Posterior vena cava (tissue), 2 donors: ENCODE measurements at regions of chr1 and their contacts with region 1.

Region 1: DNA sequence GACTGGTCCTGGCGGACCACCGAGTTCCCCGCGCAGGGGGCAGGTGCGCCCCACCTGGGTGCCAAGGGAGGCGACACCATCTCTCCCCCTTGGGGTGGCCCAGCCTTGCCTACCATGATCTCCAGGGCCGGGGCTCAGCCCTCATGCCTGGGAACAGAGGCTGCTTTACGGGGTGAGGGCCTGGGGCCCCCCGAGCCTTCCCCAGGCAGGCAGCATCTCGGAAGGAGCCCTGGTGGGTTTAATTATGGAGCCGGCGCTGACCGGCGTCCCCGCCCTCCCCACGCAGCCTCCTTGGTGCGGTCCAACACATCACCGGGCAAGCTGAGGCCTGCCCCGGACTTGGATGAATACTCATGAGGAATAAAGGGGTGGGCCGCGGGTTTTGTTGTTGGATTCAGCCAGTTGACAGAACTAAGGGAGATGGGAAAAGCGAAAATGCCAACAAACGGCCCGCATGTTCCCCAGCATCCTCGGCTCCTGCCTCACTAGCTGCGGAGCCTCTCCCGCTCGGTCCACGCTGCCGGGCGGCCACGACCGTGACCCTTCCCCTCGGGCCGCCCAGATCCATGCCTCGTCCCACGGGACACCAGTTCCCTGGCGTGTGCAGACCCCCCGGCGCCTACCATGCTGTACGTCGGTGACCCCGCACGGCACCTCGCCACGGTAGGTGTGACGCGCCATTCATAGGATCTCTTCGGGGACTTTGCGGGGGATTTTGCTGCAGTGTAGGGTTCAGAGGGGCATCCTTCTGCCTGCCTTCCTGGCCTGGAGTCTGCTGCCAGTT is 38.2 kb downstream of the TP73 start:
- DNase-seq: no peak

Region 2: DNA sequence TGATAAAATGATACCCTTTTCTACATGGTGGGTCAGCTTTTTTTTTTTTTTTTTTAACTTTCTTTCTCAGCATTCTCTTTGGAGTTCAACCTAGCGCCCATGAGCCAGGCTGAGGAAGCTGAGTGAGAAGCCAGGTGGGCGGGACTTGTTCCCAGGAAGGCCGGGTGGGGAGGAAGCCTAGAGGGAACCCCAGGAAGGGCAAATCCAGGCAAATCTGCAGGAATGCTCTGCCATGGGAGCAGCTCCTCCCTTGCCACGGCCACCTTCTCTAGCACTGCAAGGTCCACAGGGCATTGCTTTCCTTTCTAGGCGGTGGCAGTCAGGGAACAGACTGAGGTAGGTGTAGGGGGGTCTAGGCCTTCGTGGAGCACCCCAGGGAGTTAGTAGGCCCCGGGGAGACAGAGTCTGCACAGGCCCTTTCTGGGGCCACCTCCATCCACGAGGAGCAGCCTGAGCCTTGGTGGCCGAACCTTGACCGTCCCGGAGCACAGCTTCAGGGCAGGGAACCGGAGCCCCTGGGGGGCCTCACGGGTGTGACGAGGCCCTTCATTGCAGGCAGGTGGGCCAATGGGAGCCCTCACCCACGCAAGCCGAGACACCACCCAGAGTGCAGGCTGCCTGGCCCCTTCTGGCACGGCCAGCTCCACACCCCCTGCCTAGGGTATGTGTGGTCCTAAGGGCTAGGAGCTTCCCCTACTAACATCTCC is 43.6 kb after region 1 on chr1:
- intact Hi-C with region 1: loop called in 1 of 2 experiments (anchors 1 kb)
- DNase-seq: no peak

Region 3: DNA sequence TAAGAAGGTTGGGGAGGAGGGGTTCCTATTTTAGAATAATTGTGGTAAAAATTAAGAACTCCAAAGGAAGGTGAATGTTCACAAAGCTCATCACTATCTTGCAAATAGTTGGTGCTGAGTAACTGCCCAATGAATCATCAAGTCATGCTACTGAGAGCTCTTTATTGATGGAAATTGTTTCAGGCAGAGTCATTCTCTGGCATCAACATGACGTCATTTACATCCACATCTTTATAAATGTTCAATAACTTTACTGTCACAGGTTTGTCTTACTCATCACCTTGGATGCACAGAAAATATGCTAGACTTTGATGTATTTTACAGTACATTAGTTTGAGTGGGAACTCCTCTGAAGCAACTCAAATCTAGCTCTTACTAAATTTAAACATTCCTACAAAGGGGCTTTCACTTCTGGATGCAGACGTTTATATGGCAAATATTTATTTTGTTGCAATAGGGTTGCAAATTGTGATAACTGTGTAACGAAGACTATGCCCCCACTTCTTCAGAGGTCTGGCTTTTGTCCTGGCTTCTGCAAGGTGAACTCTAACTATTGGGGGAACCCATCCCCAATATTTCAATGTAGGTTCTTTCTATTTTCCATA is 690.2 kb after region 1 on chr1:
- intact Hi-C with region 1: loop called in 1 of 2 experiments (anchors 5 kb)
- DNase-seq: no peak